Sciatic nerve (tissue), 2 donors: ENCODE measurements at regions of chr15 and their contacts with region 1.

Region 1: DNA sequence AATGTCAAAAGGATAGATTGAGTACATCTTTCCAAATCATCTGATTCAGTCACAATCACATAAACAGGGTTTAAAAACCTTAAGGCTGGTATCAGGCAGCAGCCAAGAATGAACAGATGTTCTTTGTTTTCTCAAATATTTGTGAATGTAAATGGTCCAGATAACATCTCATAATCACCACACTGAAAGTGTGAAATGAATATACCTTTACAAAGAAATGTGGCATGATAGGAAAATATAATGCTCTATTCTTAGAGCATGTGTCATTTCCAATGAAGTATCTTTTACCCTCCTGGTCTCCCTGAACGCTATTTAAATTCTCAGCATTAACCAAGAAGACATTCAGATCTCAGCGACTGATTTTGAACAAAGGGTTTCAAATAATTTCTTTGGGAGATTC is 8.8 kb upstream of the ACTC1 start:
- DNase-seq: no peak
- ATAC-seq: no peak

Region 2: GRCh38 chr15:34847612-34848011 is 43.5 kb after region 1 on chr15:
- intact Hi-C with region 1: loop called (anchors 2 kb)
- DNase-seq: no peak
- ATAC-seq: no peak